Heart right ventricle (tissue), 16 donors: ENCODE measurements at regions of chr12 and their contacts with region 1.

Region 1: DNA sequence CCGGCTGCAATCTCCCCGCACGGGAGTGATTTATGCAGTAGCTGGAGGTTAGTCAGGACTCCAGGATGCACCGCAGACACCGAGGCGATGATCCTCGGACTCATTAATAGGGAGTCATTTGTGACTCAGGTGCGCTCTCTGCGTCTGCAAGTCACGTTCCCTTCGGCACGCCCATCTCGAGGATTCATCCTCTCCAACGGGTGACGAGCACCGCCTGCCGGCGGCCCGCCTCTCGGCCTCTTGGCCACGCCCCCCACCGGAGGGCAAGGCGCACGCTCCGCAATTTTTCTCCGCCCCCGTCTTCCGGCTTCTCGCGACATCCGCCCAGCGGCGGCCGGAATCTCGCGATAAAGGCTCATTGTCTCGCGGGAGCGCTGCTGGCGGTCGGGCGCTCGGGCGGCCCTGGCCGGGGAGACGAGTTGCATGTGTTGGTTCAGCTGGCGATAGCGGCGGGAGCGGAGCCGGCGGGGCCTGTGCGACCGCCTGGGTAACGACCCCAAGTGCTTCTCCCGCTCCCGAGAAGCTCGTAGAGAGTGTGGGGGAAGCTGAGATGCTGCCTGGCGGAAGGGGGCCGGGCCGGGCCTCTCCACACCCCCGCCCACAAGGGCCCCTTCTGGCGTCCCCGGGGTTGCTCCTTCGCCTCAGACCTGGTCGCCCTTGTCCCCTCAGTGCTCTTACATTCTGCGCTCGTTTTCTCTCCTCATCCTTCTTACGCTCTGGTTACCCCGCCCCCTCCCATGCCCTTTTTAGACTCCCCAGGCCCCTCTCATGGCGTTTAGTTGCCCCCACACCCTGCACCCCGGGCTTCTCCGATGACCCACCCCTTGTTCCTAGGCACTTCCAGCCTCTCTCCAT is at the start of gene DENR:
- DNase-seq: peak; percentile 97 to 99
- ATAC-seq: peak; percentile 98 to 99 (median 99)
- H3K4me3 ChIP-seq: peak within 1 kb of the TSS; percentile 36 to 100 (median 92)
- H3K27ac ChIP-seq: peak within 1 kb of the TSS; percentile 62 to 94 (median 90)
- H3K4me1 ChIP-seq: peaks cover 0 to 24% (median 16%) of the 10 kb centered on the region in 9 donors
- H3K27me3 ChIP-seq: no peaks in the 10 kb centered on the region
- CTCF ChIP-seq: peak; percentile 21 to 95 (median 81)
- total RNA-seq, gene DENR: 23.1 to 31.0 (median 25.9) TPM

Region 2: GRCh38 chr12:122526683-122527477 is 225.8 kb before region 1 on chr12 and contains the starts of genes KNTC1 and RSRC2:
- intact Hi-C with region 1: loop called in 5 of 10 experiments (anchors 2 to 10 kb)
- DNase-seq: peak; percentile 93 to 100
- ATAC-seq: peak; percentile 97 to 99 (median 98)
- H3K4me3 ChIP-seq: peak within 1 kb of the TSS; percentile 57 to 91 (median 76)
- H3K27ac ChIP-seq: peak within 1 kb of the TSS; percentile 92 to 100 (median 98)
- H3K4me1 ChIP-seq: peaks cover 6 to 48% (median 46%) of the 10 kb centered on the region in 9 donors
- H3K27me3 ChIP-seq: no peaks in the 10 kb centered on the region
- CTCF ChIP-seq: peak in 1 of 9 donors; percentile 6
- total RNA-seq, gene KNTC1: 2.0 to 7.0 (median 3.0) TPM
- total RNA-seq, gene RSRC2: 36.1 to 44.3 (median 40.6) TPM

Region 3: GRCh38 chr12:122635471-122635870 is 117.2 kb before region 1 on chr12:
- intact Hi-C with region 1: loop called in 9 of 10 experiments (anchors 1 to 5 kb)
- DNase-seq: no peak
- ATAC-seq: no peak
- H3K4me3 ChIP-seq: no peak overlapping the region
- H3K27ac ChIP-seq: no peak overlapping the region
- H3K4me1 ChIP-seq: no peaks in the 10 kb centered on the region
- H3K27me3 ChIP-seq: no peaks in the 10 kb centered on the region
- CTCF ChIP-seq: no peak

Region 4: GRCh38 chr12:122646517-122647217 is 106.0 kb before region 1 on chr12:
- intact Hi-C with region 1: loop called in 1 of 10 experiments (anchors 5 kb)
- DNase-seq: no peak
- ATAC-seq: peak in 3 of 8 donors; percentile 22 to 37 (median 33)
- H3K4me3 ChIP-seq: no peak overlapping the region
- H3K27ac ChIP-seq: no peak overlapping the region
- H3K4me1 ChIP-seq: peaks cover 0 to 15% (median 0%) of the 10 kb centered on the region in 9 donors
- H3K27me3 ChIP-seq: peaks cover 0 to 5% (median 0%) of the 10 kb centered on the region in 7 donors
- CTCF ChIP-seq: no peak